CD4-positive, alpha-beta memory T cell (primary cell): ENCODE measurements at regions of chr17 and their contacts with region 1.

Region 1: GRCh38 chr17:27760069-27760885 is 40.1 kb downstream of the NOS2 start:
- DNase-seq: peak; percentile 40 to 63 (median 50)
- H3K4me3 ChIP-seq: no peak overlapping the region
- H3K4me3 Mint-ChIP-seq: no peak overlapping the region
- H3K27ac ChIP-seq: no peak overlapping the region
- H3K27ac Mint-ChIP-seq: no peak overlapping the region
- H3K4me1 ChIP-seq: no peaks in the 10 kb centered on the region
- H3K4me1 Mint-ChIP-seq: peaks cover 0 to 3% (median 0%) of the 10 kb centered on the region in 4 donors
- H3K27me3 ChIP-seq: no peaks in the 10 kb centered on the region
- H3K27me3 Mint-ChIP-seq: peaks cover 2 to 5% of the 10 kb centered on the region in 2 donors

Region 2: GRCh38 chr17:27612160-27612770 is 148.0 kb before region 1 on chr17:
- CTCF ChIA-PET with region 1: no interaction called
- POLR2A ChIA-PET with region 1: no interaction called
- intact Hi-C with region 1: no loop called
- DNase-seq: no peak
- H3K4me3 ChIP-seq: no peak overlapping the region
- H3K4me3 Mint-ChIP-seq: no peak overlapping the region
- H3K27ac ChIP-seq: no peak overlapping the region
- H3K27ac Mint-ChIP-seq: peak overlapping the region in 3 of 7 donors; percentile 7 to 60 (median 8)
- H3K4me1 ChIP-seq: peaks cover 14% of the 10 kb centered on the region
- H3K4me1 Mint-ChIP-seq: peaks cover 15 to 29% (median 16%) of the 10 kb centered on the region in 4 donors
- H3K27me3 ChIP-seq: no peaks in the 10 kb centered on the region
- H3K27me3 Mint-ChIP-seq: no peaks in the 10 kb centered on the region

Region 3: DNA sequence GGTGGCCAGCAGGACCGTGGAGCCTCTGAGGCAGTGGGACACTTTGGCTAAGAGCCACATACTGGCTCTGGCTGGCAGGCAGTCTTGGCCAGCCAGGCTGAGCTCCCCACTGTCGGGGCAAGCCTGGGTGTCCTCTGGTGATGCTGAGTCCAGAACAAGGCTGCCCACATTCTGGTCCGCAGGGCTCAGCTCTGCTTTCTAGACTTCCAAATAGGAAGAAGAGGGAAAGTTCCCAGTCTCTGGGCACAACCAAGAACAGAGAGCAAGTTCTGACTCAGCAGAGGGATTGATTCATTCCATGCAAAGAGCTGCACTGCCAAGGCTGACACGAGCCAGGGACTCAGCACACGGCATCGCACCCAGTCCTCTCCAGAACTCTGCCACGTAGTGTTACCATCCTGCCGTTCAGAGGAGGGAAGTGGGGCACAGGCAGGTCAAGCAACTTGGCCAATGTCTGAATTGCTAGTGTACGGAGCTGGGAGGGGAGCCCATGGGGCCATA is 18.9 kb before region 1 on chr17:
- CTCF ChIA-PET with region 1: interaction called, 13 read pairs
- POLR2A ChIA-PET with region 1: no interaction called
- intact Hi-C with region 1: no loop called
- DNase-seq: no peak
- H3K4me3 ChIP-seq: no peak overlapping the region
- H3K4me3 Mint-ChIP-seq: no peak overlapping the region
- H3K27ac ChIP-seq: no peak overlapping the region
- H3K27ac Mint-ChIP-seq: no peak overlapping the region
- H3K4me1 ChIP-seq: no peaks in the 10 kb centered on the region
- H3K4me1 Mint-ChIP-seq: peaks cover 0 to 3% (median 0%) of the 10 kb centered on the region in 4 donors
- H3K27me3 ChIP-seq: no peaks in the 10 kb centered on the region
- H3K27me3 Mint-ChIP-seq: peaks cover 2 to 4% of the 10 kb centered on the region in 2 donors

Region 4: GRCh38 chr17:27879987-27880608 is 119.8 kb after region 1 on chr17:
- CTCF ChIA-PET with region 1: interaction called, 36 read pairs
- POLR2A ChIA-PET with region 1: no interaction called
- intact Hi-C with region 1: loop called (anchors 1 kb)
- DNase-seq: peak; percentile 50 to 62 (median 54)
- H3K4me3 ChIP-seq: no peak overlapping the region
- H3K4me3 Mint-ChIP-seq: peak overlapping the region in 2 of 8 donors; percentile 15 to 39
- H3K27ac ChIP-seq: no peak overlapping the region
- H3K27ac Mint-ChIP-seq: peak overlapping the region in 2 of 7 donors; percentile 47 to 48
- H3K4me1 ChIP-seq: peaks cover 16% of the 10 kb centered on the region
- H3K4me1 Mint-ChIP-seq: peaks cover 8 to 21% (median 17%) of the 10 kb centered on the region in 4 donors
- H3K27me3 ChIP-seq: no peaks in the 10 kb centered on the region
- H3K27me3 Mint-ChIP-seq: no peaks in the 10 kb centered on the region

Region 5: GRCh38 chr17:27899525-27899924 is 139.2 kb after region 1 on chr17:
- CTCF ChIA-PET with region 1: no interaction called
- POLR2A ChIA-PET with region 1: no interaction called
- intact Hi-C with region 1: no loop called
- DNase-seq: no peak
- H3K4me3 ChIP-seq: no peak overlapping the region
- H3K4me3 Mint-ChIP-seq: no peak overlapping the region
- H3K27ac ChIP-seq: no peak overlapping the region
- H3K27ac Mint-ChIP-seq: no peak overlapping the region
- H3K4me1 ChIP-seq: no peaks in the 10 kb centered on the region
- H3K4me1 Mint-ChIP-seq: no peaks in the 10 kb centered on the region
- H3K27me3 ChIP-seq: peaks cover 7% of the 10 kb centered on the region
- H3K27me3 Mint-ChIP-seq: peaks cover 21 to 35% of the 10 kb centered on the region in 2 donors